ENCODE measurements at regions of chr1 and their contacts with region 1.

Region 1: DNA sequence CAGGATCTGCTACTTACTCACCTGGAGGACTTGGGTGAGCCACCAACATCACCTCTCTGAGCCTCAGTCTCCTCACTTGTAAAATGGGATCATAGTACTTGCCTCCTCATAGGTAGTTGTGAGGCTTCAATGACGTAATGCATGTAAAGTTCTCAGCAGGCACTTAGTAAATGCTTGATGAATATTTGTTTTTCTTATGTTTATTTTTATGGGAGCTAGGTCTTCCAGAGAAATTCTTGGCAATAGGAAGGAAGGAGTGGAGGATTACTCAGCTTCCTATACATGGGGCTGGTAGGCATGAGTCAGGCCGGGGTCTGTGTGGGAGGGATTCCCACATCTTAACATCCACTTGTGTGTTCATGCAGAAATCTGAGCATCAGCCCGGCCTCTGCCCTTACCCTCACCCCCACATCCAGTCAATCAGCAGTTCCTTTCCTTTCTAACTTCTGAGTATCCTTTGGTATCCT is 95.4 kb upstream of the USP24 start:
- DNase-seq: peak; percentile 98
- H3K4me3 ChIP-seq: peak overlapping the region in 1 of 3 experiments; percentile 10
- H3K27ac ChIP-seq: peak overlapping the region; percentile 93
- H3K4me1 ChIP-seq: peaks cover 32% of the 10 kb centered on the region
- H3K27me3 ChIP-seq: no peaks in the 10 kb centered on the region
- CTCF ChIP-seq: no peak
- POLR2A ChIP-seq: peak; percentile 19

Region 2: DNA sequence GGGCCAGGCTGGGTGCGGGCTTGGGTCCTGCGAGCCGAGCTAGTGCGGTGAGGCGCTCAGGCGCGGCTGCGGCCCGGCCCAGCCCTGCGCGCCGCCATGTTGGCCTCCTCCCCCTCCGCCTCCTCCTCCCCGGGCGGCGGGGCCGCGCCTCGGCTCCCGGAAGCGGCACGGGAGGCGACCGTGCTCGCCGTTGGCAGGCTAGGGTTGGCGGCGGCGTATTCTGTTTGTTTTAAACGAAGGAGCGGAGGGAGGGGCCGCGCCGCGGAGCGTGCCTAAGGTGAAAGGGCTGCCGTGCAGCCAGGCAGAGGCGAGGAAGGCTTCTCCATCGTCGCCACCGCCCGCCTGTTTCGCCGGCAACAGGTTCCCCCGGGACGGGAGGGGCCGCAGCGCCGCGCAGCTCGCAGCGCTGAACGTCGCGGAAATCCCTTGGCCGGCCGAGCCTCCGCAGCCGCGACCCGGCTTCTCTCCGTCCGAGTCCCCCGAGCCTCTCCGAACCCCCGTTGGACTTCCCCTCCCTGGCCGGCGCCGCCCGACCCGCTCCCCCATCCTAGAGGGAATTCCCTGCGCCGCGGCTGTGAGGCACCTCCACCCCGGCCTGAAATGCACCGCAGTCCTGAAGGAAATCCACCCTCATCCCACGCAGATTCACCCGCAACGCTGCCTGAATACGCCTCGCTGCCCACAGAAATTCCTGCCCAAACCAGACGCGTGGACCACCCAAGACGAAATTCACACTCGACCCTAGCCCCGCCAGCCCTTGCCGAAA is 95.1 kb before region 1 on chr1 and contains the start of gene USP24:
- CTCF ChIA-PET with region 1: no interaction called
- POLR2A ChIA-PET with region 1: no interaction called
- dilution Hi-C with region 1: no loop called
- intact Hi-C with region 1: loop called (anchors 1 kb)
- DNase-seq: peak; percentile 69
- H3K4me3 ChIP-seq: peak within 1 kb of the TSS; percentile 46 to 79 (median 49)
- H3K27ac ChIP-seq: peak within 1 kb of the TSS; percentile 34
- H3K4me1 ChIP-seq: peaks cover 17% of the 10 kb centered on the region
- H3K27me3 ChIP-seq: no peaks in the 10 kb centered on the region
- CTCF ChIP-seq: no peak
- POLR2A ChIP-seq: peak; percentile 72
- total RNA-seq, gene USP24: 30.0 and 32.6 TPM in 2 replicates

Region 3: GRCh38 chr1:55284852-55285251 is 25.7 kb before region 1 on chr1:
- CTCF ChIA-PET with region 1: interaction called, 6 read pairs
- POLR2A ChIA-PET with region 1: no interaction called
- dilution Hi-C with region 1: no loop called
- intact Hi-C with region 1: loop called (anchors 1 kb)
- DNase-seq: peak; percentile 64
- H3K4me3 ChIP-seq: no peak overlapping the region
- H3K27ac ChIP-seq: no peak overlapping the region
- H3K4me1 ChIP-seq: peaks cover 12% of the 10 kb centered on the region
- H3K27me3 ChIP-seq: no peaks in the 10 kb centered on the region
- CTCF ChIP-seq: peak; percentile 56 to 59
- POLR2A ChIP-seq: no peak

Region 4: GRCh38 chr1:55329091-55329490 is 18.6 kb after region 1 on chr1:
- CTCF ChIA-PET with region 1: interaction called, 6 read pairs
- POLR2A ChIA-PET with region 1: no interaction called
- dilution Hi-C with region 1: no loop called
- intact Hi-C with region 1: loop called (anchors 1 kb)
- DNase-seq: no peak
- H3K4me3 ChIP-seq: no peak overlapping the region
- H3K27ac ChIP-seq: no peak overlapping the region
- H3K4me1 ChIP-seq: peaks cover 22% of the 10 kb centered on the region
- H3K27me3 ChIP-seq: no peaks in the 10 kb centered on the region
- CTCF ChIP-seq: no peak
- POLR2A ChIP-seq: no peak

Region 5: GRCh38 chr1:55428944-55429931 is 118.7 kb after region 1 on chr1:
- CTCF ChIA-PET with region 1: interaction called, 3 read pairs
- POLR2A ChIA-PET with region 1: no interaction called
- dilution Hi-C with region 1: no loop called
- intact Hi-C with region 1: loop called (anchors 1 kb)
- DNase-seq: peak; percentile 99
- H3K4me3 ChIP-seq: no peak overlapping the region
- H3K27ac ChIP-seq: peak overlapping the region; percentile 93
- H3K4me1 ChIP-seq: peaks cover 32% of the 10 kb centered on the region
- H3K27me3 ChIP-seq: no peaks in the 10 kb centered on the region
- CTCF ChIP-seq: no peak
- POLR2A ChIP-seq: peak; percentile 54

Region 6: DNA sequence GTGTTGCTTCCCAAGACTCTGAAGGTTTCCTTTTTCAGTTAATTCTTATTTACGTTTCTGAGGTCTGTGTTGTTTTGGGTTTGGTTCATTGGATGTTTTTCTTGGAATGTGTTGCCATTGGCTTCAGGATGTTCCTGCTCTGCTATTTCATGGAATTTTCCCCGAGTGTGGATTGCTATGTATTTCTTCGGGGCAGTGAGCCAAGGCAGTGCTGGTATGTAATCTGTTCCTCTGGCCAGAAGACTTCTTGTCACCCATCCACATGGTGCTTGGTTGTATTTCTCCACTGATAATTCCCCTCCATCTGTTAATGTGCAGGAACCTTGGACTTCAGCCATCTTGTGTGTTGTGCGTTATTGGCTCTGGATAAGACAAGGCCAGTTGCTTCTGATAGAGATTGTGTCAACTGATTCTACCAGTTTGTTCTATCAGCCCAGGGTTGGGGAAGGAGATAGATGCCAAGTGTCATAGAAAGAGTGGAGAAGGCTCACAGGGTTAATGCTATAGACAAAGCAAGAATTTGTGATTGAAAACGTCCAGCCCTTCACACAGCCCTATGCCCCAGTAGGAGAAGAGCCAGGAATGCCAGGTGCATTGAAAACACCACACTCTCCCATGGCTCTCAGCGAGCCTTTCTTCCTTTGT is 763.6 kb after region 1 on chr1:
- CTCF ChIA-PET with region 1: no interaction called
- POLR2A ChIA-PET with region 1: no interaction called
- dilution Hi-C with region 1: no loop called
- intact Hi-C with region 1: loop called (anchors 5 kb)
- DNase-seq: peak; percentile 99
- H3K4me3 ChIP-seq: no peak overlapping the region
- H3K27ac ChIP-seq: peak overlapping the region; percentile 45
- H3K4me1 ChIP-seq: peaks cover 38% of the 10 kb centered on the region
- H3K27me3 ChIP-seq: no peaks in the 10 kb centered on the region
- CTCF ChIP-seq: no peak
- POLR2A ChIP-seq: no peak

Region 7: GRCh38 chr1:56482486-56482885 is 1171.9 kb after region 1 on chr1:
- CTCF ChIA-PET with region 1: no interaction called
- POLR2A ChIA-PET with region 1: no interaction called
- dilution Hi-C with region 1: no loop called
- intact Hi-C with region 1: loop called (anchors 1 kb)
- DNase-seq: no peak
- H3K4me3 ChIP-seq: no peak overlapping the region
- H3K27ac ChIP-seq: no peak overlapping the region
- H3K4me1 ChIP-seq: peaks cover 24% of the 10 kb centered on the region
- H3K27me3 ChIP-seq: no peaks in the 10 kb centered on the region
- CTCF ChIP-seq: no peak
- POLR2A ChIP-seq: no peak